ENCODE measurements at regions of chr12 and their contacts with region 1.

Region 1: DNA sequence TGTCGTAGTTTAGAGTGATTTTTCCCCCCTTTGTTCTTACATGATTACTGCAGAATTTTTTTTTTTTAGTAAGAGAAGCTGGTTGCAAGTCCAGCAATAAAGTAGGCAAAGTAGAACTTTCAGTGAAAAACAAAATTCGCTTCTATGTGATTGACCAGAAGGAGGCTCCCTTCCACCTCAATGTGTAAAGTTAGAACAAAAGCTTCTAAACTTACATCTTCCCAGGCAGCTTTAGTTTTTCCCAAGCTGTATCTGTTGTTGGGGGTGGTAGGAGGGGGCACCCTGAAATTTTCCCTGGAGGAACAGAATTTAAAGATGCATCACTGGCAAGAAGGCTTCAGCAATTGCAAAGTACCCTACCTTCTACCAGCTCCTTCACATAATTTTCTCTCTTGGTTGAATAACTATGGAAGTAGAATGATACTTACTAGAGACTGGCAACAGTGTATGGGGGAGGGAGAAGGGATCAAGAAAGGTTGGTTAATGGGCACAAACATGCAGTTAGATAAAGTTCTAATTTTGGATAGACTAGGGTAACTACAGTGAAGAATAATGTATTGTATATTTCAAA is 87.3 kb upstream of the E2F7 start:
- DNase-seq: no peak
- ATAC-seq: peak; percentile 45

Region 2: DNA sequence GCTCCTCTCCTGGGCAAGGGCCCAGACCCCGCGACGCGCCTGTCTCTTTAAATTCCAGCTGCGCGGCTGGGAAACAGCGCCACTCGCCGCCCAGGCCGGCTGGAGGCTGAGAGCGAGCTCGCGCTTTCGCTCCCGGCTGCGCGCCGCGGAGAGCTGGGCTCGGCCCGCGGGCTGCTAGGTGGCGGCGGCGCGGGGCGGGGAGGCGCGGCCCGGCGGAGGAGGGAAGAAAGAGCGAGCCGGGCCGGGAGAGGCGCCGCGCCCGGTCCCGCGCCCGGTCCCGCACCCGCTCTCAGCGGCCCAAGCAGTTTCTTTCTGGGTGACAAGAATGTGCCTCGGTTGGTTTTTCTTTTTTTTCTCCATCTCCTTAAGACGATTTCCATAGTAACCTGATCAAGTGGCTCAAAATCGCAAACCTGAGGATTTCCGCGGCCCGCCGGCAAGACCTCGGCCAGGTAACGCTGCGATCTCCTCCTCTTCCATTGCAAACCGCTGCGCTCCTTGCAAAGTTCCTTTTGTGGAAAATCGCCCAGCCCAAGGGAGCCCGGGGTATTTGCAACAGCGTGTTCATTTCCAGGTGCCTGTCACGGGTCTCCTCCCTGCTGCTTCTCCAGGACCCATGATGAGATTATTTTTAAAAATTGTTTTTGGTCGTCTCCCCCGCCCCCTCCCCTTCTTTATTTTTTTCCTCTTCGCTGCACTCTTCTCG is 172.2 kb after region 1 on chr12:
- intact Hi-C with region 1: loop called in 1 of 2 experiments (anchors 10 kb)
- DNase-seq: peak; percentile 46 to 76
- ATAC-seq: peak; percentile 100

Measured in left colon (tissue), 2 donors.